CD8-positive, alpha-beta memory T cell (primary cell): ENCODE measurements at regions of chr2 and their contacts with region 1.

Region 1: DNA sequence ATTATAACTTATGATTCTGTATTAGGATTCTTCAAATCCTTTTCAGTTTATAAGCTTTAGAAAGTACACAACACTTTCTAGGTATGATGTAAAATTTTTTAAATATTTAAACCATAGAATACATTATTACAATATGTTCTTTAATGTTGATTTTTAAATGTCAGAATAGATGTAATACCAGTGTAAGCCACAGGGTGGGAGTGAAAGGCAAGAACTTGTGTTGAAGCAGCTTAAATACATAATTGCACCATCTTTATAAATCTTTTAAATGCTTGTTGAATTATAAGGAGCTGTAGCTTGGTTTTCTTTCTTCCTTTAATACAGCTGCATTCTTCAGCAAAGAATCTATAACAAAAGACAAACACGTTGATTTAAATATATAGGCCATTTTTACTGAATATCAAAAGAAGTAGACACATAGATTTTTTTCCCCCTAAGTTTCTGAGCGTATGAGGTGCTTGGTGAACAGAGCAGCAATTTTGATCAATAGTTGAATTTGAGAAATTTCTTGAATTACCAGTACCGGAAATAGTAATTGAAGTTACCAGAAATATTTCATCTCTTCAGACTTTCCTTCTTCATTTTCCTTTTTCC is 63.0 kb downstream of the TANK start:
- DNase-seq: peak in 2 of 5 donors; percentile 41 to 48
- H3K4me3 ChIP-seq: no peak overlapping the region
- H3K4me3 Mint-ChIP-seq: no peak overlapping the region
- H3K27ac ChIP-seq: no peak overlapping the region
- H3K27ac Mint-ChIP-seq: no peak overlapping the region
- H3K4me1 ChIP-seq: no peaks in the 10 kb centered on the region
- H3K4me1 Mint-ChIP-seq: peaks cover 3 to 18% (median 13%) of the 10 kb centered on the region in 3 donors
- H3K27me3 ChIP-seq: no peaks in the 10 kb centered on the region
- H3K27me3 Mint-ChIP-seq: no peaks in the 10 kb centered on the region

Region 2: GRCh38 chr2:161077367-161078210 is 145.6 kb before region 1 on chr2:
- CTCF ChIA-PET with region 1: no interaction called
- POLR2A ChIA-PET with region 1: no interaction called
- DNase-seq: peak; percentile 28 to 69 (median 60)
- H3K4me3 ChIP-seq: no peak overlapping the region
- H3K4me3 Mint-ChIP-seq: peak overlapping the region; percentile 0 to 55 (median 31)
- H3K27ac ChIP-seq: no peak overlapping the region
- H3K27ac Mint-ChIP-seq: peak overlapping the region; percentile 22 to 90 (median 58)
- H3K4me1 ChIP-seq: peaks cover 23% of the 10 kb centered on the region
- H3K4me1 Mint-ChIP-seq: peaks cover 28 to 35% (median 29%) of the 10 kb centered on the region in 3 donors
- H3K27me3 ChIP-seq: no peaks in the 10 kb centered on the region
- H3K27me3 Mint-ChIP-seq: no peaks in the 10 kb centered on the region

Region 3: GRCh38 chr2:161238560-161239325 is 15.5 kb after region 1 on chr2:
- CTCF ChIA-PET with region 1: interaction called, 12 read pairs
- POLR2A ChIA-PET with region 1: no interaction called
- DNase-seq: peak; percentile 42 to 79 (median 60)
- H3K4me3 ChIP-seq: peak overlapping the region; percentile 56
- H3K4me3 Mint-ChIP-seq: peak overlapping the region; percentile 86 to 99 (median 95)
- H3K27ac ChIP-seq: no peak overlapping the region
- H3K27ac Mint-ChIP-seq: peak overlapping the region; percentile 51 to 91 (median 82)
- H3K4me1 ChIP-seq: peaks cover 32% of the 10 kb centered on the region
- H3K4me1 Mint-ChIP-seq: peaks cover 40 to 65% (median 55%) of the 10 kb centered on the region in 3 donors
- H3K27me3 ChIP-seq: no peaks in the 10 kb centered on the region
- H3K27me3 Mint-ChIP-seq: no peaks in the 10 kb centered on the region

Region 4: DNA sequence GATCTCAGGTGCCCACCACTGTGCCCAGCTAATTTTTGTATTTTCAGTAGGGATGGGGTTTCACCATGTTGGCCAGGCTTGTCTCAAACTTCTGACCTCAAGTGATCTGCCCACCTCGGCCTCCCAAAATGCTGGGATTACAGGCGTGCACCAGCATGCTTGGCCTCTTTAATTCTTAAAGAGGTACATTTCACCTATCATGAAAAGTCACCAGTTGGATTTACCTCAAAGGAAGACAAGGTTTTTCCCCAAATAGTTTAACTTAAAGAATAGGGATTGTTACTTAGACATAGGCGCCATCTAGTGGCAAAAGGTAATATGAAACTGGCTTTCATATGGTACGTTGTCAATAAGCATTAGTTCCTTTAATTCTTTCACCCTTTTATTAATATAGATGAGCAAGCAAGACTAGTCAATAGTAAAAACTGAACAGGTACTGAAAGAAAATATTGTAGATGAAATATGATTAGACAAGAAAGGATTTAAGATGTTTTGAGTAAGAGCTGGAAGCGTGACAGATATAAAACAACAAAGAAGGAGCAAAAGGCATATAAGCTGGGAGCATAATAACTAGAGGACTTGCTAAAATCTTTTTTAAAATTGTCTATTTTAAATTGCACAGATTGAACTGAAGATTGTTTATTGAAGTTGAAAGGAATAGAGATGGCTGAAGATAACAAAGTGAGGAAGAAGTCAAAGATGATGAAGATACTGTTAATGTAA is 50.0 kb after region 1 on chr2:
- CTCF ChIA-PET with region 1: interaction called, 18 read pairs
- POLR2A ChIA-PET with region 1: no interaction called
- DNase-seq: peak in 2 of 5 donors; percentile 46 to 52
- H3K4me3 ChIP-seq: no peak overlapping the region
- H3K4me3 Mint-ChIP-seq: no peak overlapping the region
- H3K27ac ChIP-seq: no peak overlapping the region
- H3K27ac Mint-ChIP-seq: no peak overlapping the region
- H3K4me1 ChIP-seq: no peaks in the 10 kb centered on the region
- H3K4me1 Mint-ChIP-seq: peaks cover 0 to 4% (median 3%) of the 10 kb centered on the region in 3 donors
- H3K27me3 ChIP-seq: no peaks in the 10 kb centered on the region
- H3K27me3 Mint-ChIP-seq: peaks cover 3 to 33% of the 10 kb centered on the region in 2 donors

Region 5: GRCh38 chr2:161308178-161308955 is 85.1 kb after region 1 on chr2 and contains the start of gene PSMD14:
- CTCF ChIA-PET with region 1: no interaction called
- POLR2A ChIA-PET with region 1: no interaction called
- DNase-seq: peak; percentile 84 to 94 (median 87)
- H3K4me3 ChIP-seq: peak within 1 kb of the TSS; percentile 61
- H3K4me3 Mint-ChIP-seq: peak within 1 kb of the TSS; percentile 90 to 100 (median 96)
- H3K27ac ChIP-seq: peak within 1 kb of the TSS; percentile 83
- H3K27ac Mint-ChIP-seq: peak within 1 kb of the TSS; percentile 92 to 99 (median 97)
- H3K4me1 ChIP-seq: peaks cover 16% of the 10 kb centered on the region
- H3K4me1 Mint-ChIP-seq: peaks cover 33 to 57% (median 56%) of the 10 kb centered on the region in 3 donors
- H3K27me3 ChIP-seq: no peaks in the 10 kb centered on the region
- H3K27me3 Mint-ChIP-seq: peaks cover 0 to 1% of the 10 kb centered on the region in 2 donors
- total RNA-seq, gene PSMD14: 100 to 106 TPM